Activated CD4-positive, alpha-beta memory T cell treated with anti-CD3 and anti-CD28 coated beads for 36 hours (primary cell): ENCODE measurements at regions of chr12 and their contacts with region 1.

Region 1: GRCh38 chr12:32755654-32756475 is at the start of gene YARS2:
- DNase-seq: peak; percentile 93
- H3K4me3 Mint-ChIP-seq: peak within 1 kb of the TSS; percentile 91
- H3K27ac Mint-ChIP-seq: peak within 1 kb of the TSS; percentile 93
- H3K4me1 Mint-ChIP-seq: peaks cover 21% of the 10 kb centered on the region
- H3K27me3 Mint-ChIP-seq: no peaks in the 10 kb centered on the region
- total RNA-seq, gene YARS2: 23.1 to 28.4 TPM

Region 2: GRCh38 chr12:31650927-31651326 is 1104.9 kb before region 1 on chr12:
- CTCF ChIA-PET with region 1: interaction called, 18 read pairs
- POLR2A ChIA-PET with region 1: interaction called, 8 read pairs
- intact Hi-C with region 1: loop called (anchors 1 kb)
- DNase-seq: no peak
- H3K4me3 Mint-ChIP-seq: no peak overlapping the region
- H3K27ac Mint-ChIP-seq: no peak overlapping the region
- H3K4me1 Mint-ChIP-seq: peaks cover 11% of the 10 kb centered on the region
- H3K27me3 Mint-ChIP-seq: no peaks in the 10 kb centered on the region

Region 3: GRCh38 chr12:32365473-32366064 is 390.3 kb before region 1 on chr12:
- CTCF ChIA-PET with region 1: interaction called, 16 read pairs
- POLR2A ChIA-PET with region 1: no interaction called
- intact Hi-C with region 1: loop called (anchors 1 kb)
- DNase-seq: peak; percentile 53
- H3K4me3 Mint-ChIP-seq: no peak overlapping the region
- H3K27ac Mint-ChIP-seq: no peak overlapping the region
- H3K4me1 Mint-ChIP-seq: no peaks in the 10 kb centered on the region
- H3K27me3 Mint-ChIP-seq: no peaks in the 10 kb centered on the region

Region 4: DNA sequence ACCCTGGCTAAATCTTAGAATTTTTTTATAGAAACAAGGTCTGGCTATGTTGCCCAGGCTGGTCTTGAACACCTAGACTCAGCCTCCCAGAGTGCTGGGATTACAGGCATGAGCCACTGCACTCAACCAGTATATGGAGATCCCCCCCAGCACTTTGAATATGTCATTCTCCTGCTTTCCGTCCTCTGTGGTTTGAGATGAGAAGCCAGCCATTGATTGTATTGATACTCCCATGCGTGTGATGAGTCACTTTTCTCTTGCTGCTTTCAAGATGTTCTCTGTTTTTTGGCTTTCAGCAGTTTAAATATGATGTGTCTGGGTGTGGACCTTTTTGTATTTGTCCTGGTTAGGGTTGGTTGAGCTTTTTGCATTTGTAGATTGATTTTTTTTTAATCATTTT is 152.0 kb before region 1 on chr12:
- CTCF ChIA-PET with region 1: no interaction called
- POLR2A ChIA-PET with region 1: no interaction called
- intact Hi-C with region 1: loop called (anchors 1 kb)
- DNase-seq: peak; percentile 53
- H3K4me3 Mint-ChIP-seq: no peak overlapping the region
- H3K27ac Mint-ChIP-seq: no peak overlapping the region
- H3K4me1 Mint-ChIP-seq: peaks cover 8% of the 10 kb centered on the region
- H3K27me3 Mint-ChIP-seq: peaks cover 3% of the 10 kb centered on the region

Region 5: DNA sequence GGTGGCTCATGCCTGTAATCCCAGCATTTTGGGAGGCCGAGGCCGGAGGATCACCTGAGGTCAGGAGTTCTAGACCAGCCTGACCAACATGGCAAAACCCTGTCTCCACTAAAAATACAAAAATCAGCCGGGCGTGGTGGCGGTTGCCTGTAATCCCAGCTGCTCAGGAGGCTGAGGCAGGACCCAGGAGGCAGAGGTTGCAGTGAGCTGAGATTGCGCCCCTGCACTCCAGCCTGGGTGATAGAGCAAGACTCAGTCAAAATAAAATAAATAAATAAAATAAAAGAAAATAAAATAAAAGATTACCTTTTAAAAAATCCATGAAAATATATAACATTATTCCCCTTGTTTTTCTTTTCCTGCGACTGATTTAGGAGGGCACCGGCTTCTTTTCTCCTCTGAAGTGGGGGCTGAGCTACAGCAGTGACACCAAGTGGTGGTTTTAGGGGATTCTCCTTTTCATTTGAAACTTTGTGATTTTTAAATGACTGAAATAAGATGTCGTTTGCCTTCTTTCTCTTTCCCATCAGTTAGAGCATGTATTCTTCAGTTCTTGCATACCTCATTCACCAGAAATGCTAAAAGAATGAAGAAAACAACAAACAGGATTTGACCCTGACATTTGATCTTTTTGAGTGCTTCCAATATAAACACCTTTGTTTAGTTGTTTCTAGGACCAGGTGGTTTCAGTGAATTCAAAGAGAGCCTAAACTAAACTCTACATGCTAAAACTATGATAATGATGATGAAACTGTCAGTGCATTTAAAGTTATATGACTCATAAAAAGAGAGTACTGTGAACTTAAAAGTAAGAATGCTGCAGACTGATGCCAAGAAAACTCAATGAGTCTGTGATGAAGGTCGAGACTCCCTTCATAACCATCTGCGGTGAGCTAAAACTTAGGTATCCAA is 163.3 kb after region 1 on chr12:
- CTCF ChIA-PET with region 1: interaction called, 19 read pairs
- POLR2A ChIA-PET with region 1: no interaction called
- intact Hi-C with region 1: loop called (anchors 1 kb)
- DNase-seq: no peak
- H3K4me3 Mint-ChIP-seq: no peak overlapping the region
- H3K27ac Mint-ChIP-seq: no peak overlapping the region
- H3K4me1 Mint-ChIP-seq: no peaks in the 10 kb centered on the region
- H3K27me3 Mint-ChIP-seq: no peaks in the 10 kb centered on the region